Left ventricle myocardium inferior (tissue), 1 donor: ENCODE measurements at regions of chr12 and their contacts with region 1.

Region 1: DNA sequence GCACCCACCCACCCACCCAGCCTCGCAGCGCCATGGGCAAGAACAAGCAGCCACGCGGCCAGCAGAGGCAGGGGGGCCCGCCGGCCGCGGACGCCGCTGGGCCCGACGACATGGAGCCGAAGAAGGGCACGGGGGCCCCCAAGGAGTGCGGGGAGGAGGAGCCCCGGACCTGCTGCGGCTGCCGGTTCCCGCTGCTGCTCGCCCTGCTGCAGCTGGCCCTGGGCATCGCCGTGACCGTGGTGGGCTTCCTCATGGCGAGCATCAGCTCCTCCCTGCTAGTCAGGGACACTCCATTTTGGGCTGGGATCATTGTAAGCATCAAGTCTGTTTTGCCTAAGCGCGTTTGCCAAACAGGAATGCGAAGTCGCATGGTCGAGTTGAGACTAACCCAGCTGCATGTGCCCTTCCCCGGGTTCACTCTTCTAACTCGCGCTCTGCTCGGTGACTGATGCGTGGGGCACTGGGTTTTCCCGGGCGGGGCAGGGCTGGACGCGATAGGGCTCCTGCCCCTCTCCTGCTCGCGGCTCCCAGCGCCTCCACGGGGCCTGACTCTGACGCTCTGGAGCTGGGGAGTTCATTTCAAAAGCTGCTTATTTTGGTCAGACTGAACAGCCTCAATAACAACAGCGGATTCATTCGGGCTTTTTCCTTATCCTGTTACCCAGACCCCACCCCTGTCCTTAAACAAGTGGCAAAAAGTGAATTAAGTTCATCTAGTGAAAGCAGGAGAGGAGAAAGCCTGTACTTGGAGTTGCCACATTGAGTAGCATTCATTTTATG is 458 bp downstream of the SSPN start:
- DNase-seq: peak; percentile 50
- H3K4me3 ChIP-seq: peak overlapping the region; percentile 79
- H3K27ac ChIP-seq: peak overlapping the region; percentile 88
- H3K4me1 ChIP-seq: peaks cover 43% of the 10 kb centered on the region
- H3K27me3 ChIP-seq: no peaks in the 10 kb centered on the region
- CTCF ChIP-seq: no peak

Region 2: GRCh38 chr12:25557830-25558436 is 637.9 kb before region 1 on chr12:
- intact Hi-C with region 1: no loop called
- DNase-seq: no peak
- H3K4me3 ChIP-seq: no peak overlapping the region
- H3K27ac ChIP-seq: no peak overlapping the region
- H3K4me1 ChIP-seq: no peaks in the 10 kb centered on the region
- H3K27me3 ChIP-seq: no peaks in the 10 kb centered on the region
- CTCF ChIP-seq: peak; percentile 44

Region 3: GRCh38 chr12:26126340-26127284 is 69.2 kb before region 1 on chr12:
- intact Hi-C with region 1: loop called (anchors 10 kb)
- DNase-seq: peak; percentile 89
- H3K4me3 ChIP-seq: peak overlapping the region; percentile 70
- H3K27ac ChIP-seq: peak overlapping the region; percentile 94
- H3K4me1 ChIP-seq: peaks cover 46% of the 10 kb centered on the region
- H3K27me3 ChIP-seq: no peaks in the 10 kb centered on the region
- CTCF ChIP-seq: peak; percentile 14